ENCODE measurements at regions of chr2 and their contacts with region 1.

Region 1: GRCh38 chr2:220708366-220708765 is 863.7 kb downstream of the EPHA4 start:
- DNase-seq: no peak
- ATAC-seq: no peak
- H3K4me3 ChIP-seq: no peak overlapping the region
- H3K27ac ChIP-seq: no peak overlapping the region
- H3K4me1 ChIP-seq: no peaks in the 10 kb centered on the region
- H3K27me3 ChIP-seq: no peaks in the 10 kb centered on the region

Region 2: DNA sequence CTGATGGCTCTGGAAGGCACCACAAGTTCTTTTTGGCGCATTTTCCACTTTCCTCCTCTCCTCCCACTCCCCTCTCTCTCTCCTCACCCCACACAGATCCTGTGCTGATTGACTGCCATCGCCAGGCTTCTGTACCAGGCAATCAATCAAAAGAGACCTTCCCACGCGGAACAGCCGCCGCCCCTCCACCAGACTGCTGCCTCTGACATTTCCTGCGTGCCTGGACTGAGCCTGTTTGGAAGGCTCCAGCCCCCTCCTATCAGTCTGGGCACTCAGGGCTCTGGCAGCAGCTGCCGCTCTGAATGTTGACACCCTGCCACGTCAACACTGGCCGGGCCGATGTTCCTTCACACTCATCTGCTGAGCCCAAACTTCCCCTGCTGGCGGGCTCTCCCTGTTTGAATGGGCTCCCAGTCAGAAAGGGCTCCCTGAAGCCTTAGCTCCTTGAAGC is 396.0 kb after region 1 on chr2:
- intact Hi-C with region 1: loop called in 1 of 4 experiments (anchors 10 kb)
- DNase-seq: peak; percentile 88 to 95 (median 93)
- ATAC-seq: peak; percentile 98
- H3K4me3 ChIP-seq: no peak overlapping the region
- H3K27ac ChIP-seq: peak overlapping the region; percentile 67
- H3K4me1 ChIP-seq: peaks cover 9% of the 10 kb centered on the region
- H3K27me3 ChIP-seq: no peaks in the 10 kb centered on the region

Measured in right cardiac atrium (tissue), 5 donors.